ENCODE measurements at regions of chr12 and their contacts with region 1.

Region 1: DNA sequence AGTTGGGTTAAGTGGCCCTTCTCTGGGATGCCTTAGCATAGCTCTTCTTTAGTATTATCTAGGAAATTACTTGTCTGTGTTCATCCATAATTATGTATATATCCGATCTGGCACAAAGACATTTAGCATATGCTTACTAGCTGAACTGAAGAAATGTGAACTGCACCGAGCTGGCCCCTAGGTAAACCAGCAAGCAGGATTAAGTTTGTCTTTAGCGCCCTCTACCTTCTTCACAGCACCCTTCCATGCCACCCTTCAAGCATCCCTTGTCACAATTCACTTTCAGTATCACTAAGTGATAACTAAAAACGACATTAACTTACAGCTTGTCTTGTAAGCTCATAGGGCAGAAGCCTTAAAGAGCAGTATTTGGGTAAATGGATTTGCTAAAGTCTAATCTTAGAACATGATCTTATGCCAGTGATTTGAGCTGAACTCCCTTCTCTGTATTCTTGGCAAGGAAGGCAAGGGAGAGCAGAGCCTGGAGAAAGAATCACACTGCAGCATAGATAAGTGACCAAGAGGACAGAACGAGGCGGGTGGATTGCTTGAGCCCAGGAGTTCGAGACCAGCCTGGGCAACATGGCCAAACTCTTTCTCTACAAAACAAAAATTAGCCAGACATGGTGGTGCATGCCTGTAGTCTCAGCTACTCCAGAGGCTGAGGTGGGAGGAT is 2.6 kb upstream of the HAL start:
- DNase-seq: peak in 1 of 4 donors; percentile 62
- ATAC-seq: peak; percentile 92
- H3K4me3 ChIP-seq: no peak overlapping the region
- H3K27ac ChIP-seq: peak overlapping the region in 1 of 2 donors; percentile 89
- H3K4me1 ChIP-seq: peaks cover 0 to 43% of the 10 kb centered on the region in 2 donors
- H3K27me3 ChIP-seq: no peaks in the 10 kb centered on the region
- CTCF ChIP-seq: peak; percentile 63 to 69

Region 2: DNA sequence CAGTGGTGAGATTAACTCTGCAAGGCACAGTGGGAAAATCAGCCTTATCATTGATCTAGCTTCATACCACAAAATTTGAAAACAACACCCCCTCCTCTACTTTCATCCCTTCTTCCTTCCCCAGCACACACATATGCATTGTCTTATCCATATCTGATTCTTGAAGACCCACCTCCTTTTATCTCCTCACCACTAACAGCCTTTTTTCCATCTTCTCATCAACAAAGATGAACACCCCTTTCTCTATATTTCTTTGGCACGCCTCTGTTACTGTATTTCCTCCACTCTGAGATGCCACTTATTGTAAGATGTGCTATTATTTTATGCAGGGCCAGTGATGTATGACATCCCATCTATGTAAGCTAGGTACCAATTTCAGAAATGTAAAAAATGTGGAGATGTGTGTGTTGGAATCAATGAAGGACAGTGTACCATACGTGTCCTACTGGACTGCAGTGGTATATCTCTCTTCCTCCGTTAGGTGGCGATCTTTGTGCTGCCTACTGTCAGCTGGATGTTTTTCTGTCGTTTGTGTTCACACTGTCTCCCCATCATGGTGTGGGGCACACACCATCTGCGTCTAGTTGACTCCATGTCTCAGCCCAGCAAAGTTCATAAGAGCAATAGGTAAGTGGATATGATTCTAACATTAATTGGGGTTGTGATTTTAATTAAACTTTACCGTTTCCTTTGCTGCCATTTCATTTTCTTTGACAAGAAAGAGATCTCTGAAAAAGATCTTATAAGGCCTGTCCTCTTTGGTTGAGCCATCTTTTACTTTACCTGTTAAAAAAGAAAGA is 80.4 kb before region 1 on chr12:
- intact Hi-C with region 1: loop called in 1 of 2 experiments (anchors 10 kb)
- DNase-seq: peak in 2 of 4 donors; percentile 12 to 44
- ATAC-seq: peak; percentile 99
- H3K4me3 ChIP-seq: no peak overlapping the region
- H3K27ac ChIP-seq: no peak overlapping the region
- H3K4me1 ChIP-seq: no peaks in the 10 kb centered on the region
- H3K27me3 ChIP-seq: no peaks in the 10 kb centered on the region
- CTCF ChIP-seq: peak; percentile 75 to 77

Measured in left lung (tissue), 14 donors.